ENCODE measurements at regions of chr14 and their contacts with region 1.

Region 1: DNA sequence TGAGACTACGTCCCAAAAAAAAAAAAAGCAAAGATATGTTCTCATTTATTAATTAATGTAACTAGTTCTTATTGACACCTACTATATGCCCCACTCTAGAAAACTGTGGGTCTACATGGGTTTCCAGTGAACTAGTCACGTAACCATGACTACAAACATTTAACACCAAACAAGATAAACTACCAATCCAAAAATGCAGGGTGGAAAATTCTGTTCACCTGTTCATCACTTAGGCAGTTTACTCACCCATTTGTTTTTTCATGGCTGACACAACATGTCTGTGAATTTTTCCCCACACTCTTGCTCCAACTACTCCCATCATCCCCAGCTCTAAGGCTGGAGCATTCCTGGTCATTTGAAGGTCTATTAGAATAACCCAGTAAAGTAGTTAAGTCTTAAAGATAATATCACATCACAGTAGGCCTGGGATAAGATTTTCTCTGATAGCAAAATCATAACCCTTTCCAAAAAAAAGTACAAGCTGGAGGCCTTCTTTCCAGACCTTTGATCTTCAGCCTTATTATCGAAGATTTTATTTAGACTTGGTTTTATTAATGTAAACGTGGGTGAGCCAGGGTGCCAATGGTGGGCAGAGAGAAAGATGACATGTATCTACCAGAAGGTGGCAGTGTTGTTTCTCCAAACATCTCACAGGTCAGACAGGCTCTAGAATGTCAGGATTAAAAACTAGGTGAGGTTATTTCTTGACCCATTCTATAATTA is 61.6 kb upstream of the DAAM1 start:
- DNase-seq: peak; percentile 31
- H3K4me3 Mint-ChIP-seq: no peak overlapping the region
- H3K27ac Mint-ChIP-seq: no peak overlapping the region
- H3K4me1 Mint-ChIP-seq: no peaks in the 10 kb centered on the region
- H3K27me3 Mint-ChIP-seq: peaks cover 10% of the 10 kb centered on the region

Region 2: GRCh38 chr14:59428581-59429012 is 301.7 kb after region 1 on chr14:
- CTCF ChIA-PET with region 1: interaction called, 12 read pairs
- DNase-seq: no peak
- H3K4me3 Mint-ChIP-seq: no peak overlapping the region
- H3K27ac Mint-ChIP-seq: no peak overlapping the region
- H3K4me1 Mint-ChIP-seq: no peaks in the 10 kb centered on the region
- H3K27me3 Mint-ChIP-seq: peaks cover 10% of the 10 kb centered on the region

Region 3: GRCh38 chr14:59438195-59438647 is 311.4 kb after region 1 on chr14:
- CTCF ChIA-PET with region 1: interaction called, 28 read pairs
- DNase-seq: no peak
- H3K4me3 Mint-ChIP-seq: no peak overlapping the region
- H3K27ac Mint-ChIP-seq: no peak overlapping the region
- H3K4me1 Mint-ChIP-seq: no peaks in the 10 kb centered on the region
- H3K27me3 Mint-ChIP-seq: peaks cover 15% of the 10 kb centered on the region

Measured in activated naive CD4-positive, alpha-beta T cell treated with anti-CD3 and anti-CD28 coated beads, Interleukin-2, amount 10 ng/mL, durations not matched to agents 7 days and 5 days (primary cell).